CD4-positive, alpha-beta T cell (primary cell): ENCODE measurements at regions of chr20 and their contacts with region 1.

Region 1: DNA sequence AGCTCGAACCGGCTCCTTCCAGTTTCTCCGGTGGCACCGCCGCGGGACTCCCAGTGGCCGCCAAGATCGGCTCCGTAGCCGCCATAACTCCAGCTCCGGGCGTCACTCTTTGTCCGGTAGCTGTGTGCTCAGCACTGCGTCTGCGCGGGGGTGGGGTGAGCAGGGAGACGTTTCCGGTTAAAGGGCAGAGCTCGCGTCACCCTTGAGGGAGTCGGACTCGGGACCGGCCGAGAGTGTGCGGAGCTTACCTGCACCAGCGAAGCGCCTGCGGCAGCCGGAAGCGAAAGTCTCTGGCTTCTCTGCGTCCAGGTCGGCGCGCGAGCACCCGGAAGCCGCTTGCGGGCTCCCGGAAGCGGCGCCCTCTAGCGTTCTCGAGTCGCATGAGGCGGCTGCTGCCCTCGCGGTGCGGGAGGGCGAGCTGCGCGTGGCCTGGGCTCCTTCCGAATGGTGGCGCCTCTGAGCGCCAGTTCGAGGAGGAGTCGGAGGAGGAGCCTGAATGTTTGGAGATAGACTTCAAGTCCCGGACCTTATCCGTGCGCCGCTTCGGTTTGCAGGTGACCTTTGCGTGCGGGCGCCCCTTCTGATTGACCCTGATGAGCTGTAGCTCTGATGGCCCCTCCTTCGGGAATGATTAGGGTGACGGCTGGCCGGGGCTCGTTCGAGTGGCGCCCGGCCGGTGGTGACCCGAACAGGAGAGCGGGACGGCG is at the start of gene SCAND1:
- DNase-seq: peak; percentile 94 to 99 (median 96)
- ATAC-seq: peak; percentile 82
- H3K4me3 ChIP-seq: peak within 1 kb of the TSS; percentile 96
- H3K4me3 Mint-ChIP-seq: peak within 1 kb of the TSS; percentile 99
- H3K27ac ChIP-seq: peak within 1 kb of the TSS; percentile 99
- H3K27ac Mint-ChIP-seq: peak within 1 kb of the TSS; percentile 98
- H3K4me1 ChIP-seq: peaks cover 31% of the 10 kb centered on the region
- H3K4me1 Mint-ChIP-seq: peaks cover 30% of the 10 kb centered on the region
- H3K27me3 ChIP-seq: no peaks in the 10 kb centered on the region
- H3K27me3 Mint-ChIP-seq: no peaks in the 10 kb centered on the region
- CTCF ChIP-seq: peak; percentile 100
- total RNA-seq, gene SCAND1: 77.2 to 82.7 TPM

Region 2: GRCh38 chr20:34302723-34303528 is 1651.4 kb before region 1 on chr20 and contains the start of gene AHCY:
- CTCF ChIA-PET with region 1: no interaction called
- POLR2A ChIA-PET with region 1: interaction called, 6 read pairs
- intact Hi-C with region 1: loop called in 1 of 2 experiments (anchors 10 kb)
- DNase-seq: peak; percentile 78 to 96 (median 87)
- ATAC-seq: peak; percentile 94
- H3K4me3 ChIP-seq: peak within 1 kb of the TSS; percentile 82
- H3K4me3 Mint-ChIP-seq: peak within 1 kb of the TSS; percentile 98
- H3K27ac ChIP-seq: peak within 1 kb of the TSS; percentile 65 to 84
- H3K27ac Mint-ChIP-seq: peak within 1 kb of the TSS; percentile 91
- H3K4me1 ChIP-seq: peaks cover 17% of the 10 kb centered on the region
- H3K4me1 Mint-ChIP-seq: peaks cover 11% of the 10 kb centered on the region
- H3K27me3 ChIP-seq: no peaks in the 10 kb centered on the region
- H3K27me3 Mint-ChIP-seq: no peaks in the 10 kb centered on the region
- CTCF ChIP-seq: no peak
- total RNA-seq, gene AHCY: 16.7 to 16.9 TPM

Region 3: GRCh38 chr20:35410613-35411012 is 543.7 kb before region 1 on chr20:
- CTCF ChIA-PET with region 1: interaction called, 4 read pairs
- POLR2A ChIA-PET with region 1: interaction called, 7 read pairs
- intact Hi-C with region 1: loop called (anchors 1 to 5 kb)
- DNase-seq: no peak
- ATAC-seq: no peak
- H3K4me3 ChIP-seq: no peak overlapping the region
- H3K4me3 Mint-ChIP-seq: peak overlapping the region; percentile 96
- H3K27ac ChIP-seq: no peak overlapping the region
- H3K27ac Mint-ChIP-seq: peak overlapping the region; percentile 90
- H3K4me1 ChIP-seq: peaks cover 17% of the 10 kb centered on the region
- H3K4me1 Mint-ChIP-seq: peaks cover 23% of the 10 kb centered on the region
- H3K27me3 ChIP-seq: no peaks in the 10 kb centered on the region
- H3K27me3 Mint-ChIP-seq: no peaks in the 10 kb centered on the region
- CTCF ChIP-seq: no peak

Region 4: DNA sequence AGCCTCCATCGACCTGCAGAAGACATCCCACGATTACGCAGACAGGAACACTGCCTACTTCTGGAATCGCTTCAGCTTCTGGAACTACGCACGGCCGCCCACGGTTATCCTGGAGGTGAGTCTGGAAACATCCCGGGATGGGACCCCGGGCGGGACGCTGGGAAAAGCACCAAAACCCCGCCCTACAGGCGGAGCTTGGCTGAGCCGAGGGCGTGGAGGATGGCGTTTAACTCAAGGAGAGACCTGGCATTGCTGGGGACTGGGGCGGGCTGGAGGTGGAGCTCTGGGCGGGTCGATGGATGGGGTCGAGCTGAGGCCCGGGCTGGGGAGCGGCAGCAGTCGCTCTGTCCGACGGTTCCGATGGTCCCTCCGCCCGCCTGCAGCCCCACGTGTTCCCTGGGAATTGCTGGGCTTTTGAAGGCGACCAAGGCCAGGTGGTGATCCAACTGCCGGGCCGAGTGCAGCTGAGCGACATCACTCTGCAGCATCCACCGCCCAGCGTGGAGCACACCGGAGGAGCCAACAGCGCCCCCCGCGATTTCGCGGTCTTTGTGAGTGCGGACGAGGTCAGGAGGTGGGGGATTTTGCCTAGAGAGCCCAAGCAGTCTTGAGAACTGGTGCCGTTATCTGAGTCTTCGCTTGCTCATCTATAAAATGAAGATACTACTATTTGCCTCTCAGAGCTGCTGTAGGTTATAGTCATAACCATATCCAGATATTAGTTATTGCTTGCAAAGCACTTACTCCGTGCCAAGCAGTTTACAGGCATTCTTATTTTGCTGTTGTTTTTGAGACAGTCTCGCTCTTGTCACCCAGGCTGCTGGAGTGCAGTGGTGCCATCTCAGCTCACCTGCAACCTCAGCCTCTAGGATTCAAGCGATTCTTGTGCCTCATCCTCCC is 334.9 kb before region 1 on chr20:
- CTCF ChIA-PET with region 1: interaction called, 4 read pairs
- POLR2A ChIA-PET with region 1: interaction called, 23 read pairs
- intact Hi-C with region 1: loop called in 1 of 2 experiments (anchors 5 kb)
- DNase-seq: peak; percentile 50 to 91 (median 68)
- ATAC-seq: peak; percentile 9
- H3K4me3 ChIP-seq: peak overlapping the region; percentile 66
- H3K4me3 Mint-ChIP-seq: peak overlapping the region; percentile 91
- H3K27ac ChIP-seq: peak overlapping the region in 1 of 2 donors; percentile 15
- H3K27ac Mint-ChIP-seq: peak overlapping the region; percentile 94
- H3K4me1 ChIP-seq: peaks cover 45% of the 10 kb centered on the region
- H3K4me1 Mint-ChIP-seq: peaks cover 39% of the 10 kb centered on the region
- H3K27me3 ChIP-seq: no peaks in the 10 kb centered on the region
- H3K27me3 Mint-ChIP-seq: no peaks in the 10 kb centered on the region
- CTCF ChIP-seq: peak; percentile 59

Region 5: GRCh38 chr20:35771689-35772562 is 182.4 kb before region 1 on chr20 and contains the start of gene PHF20:
- CTCF ChIA-PET with region 1: interaction called, 4 read pairs
- POLR2A ChIA-PET with region 1: interaction called, 22 read pairs
- intact Hi-C with region 1: no loop called
- DNase-seq: peak; percentile 100
- ATAC-seq: peak; percentile 84
- H3K4me3 ChIP-seq: peak within 1 kb of the TSS; percentile 79
- H3K4me3 Mint-ChIP-seq: peak within 1 kb of the TSS; percentile 97
- H3K27ac ChIP-seq: peak within 1 kb of the TSS; percentile 86 to 96
- H3K27ac Mint-ChIP-seq: peak within 1 kb of the TSS; percentile 96
- H3K4me1 ChIP-seq: peaks cover 84% of the 10 kb centered on the region
- H3K4me1 Mint-ChIP-seq: peaks cover 75% of the 10 kb centered on the region
- H3K27me3 ChIP-seq: no peaks in the 10 kb centered on the region
- H3K27me3 Mint-ChIP-seq: no peaks in the 10 kb centered on the region
- CTCF ChIP-seq: no peak
- total RNA-seq, gene PHF20: 119 to 126 TPM

Region 6: GRCh38 chr20:36064658-36065426 is 110.5 kb after region 1 on chr20:
- CTCF ChIA-PET with region 1: interaction called, 4 read pairs
- POLR2A ChIA-PET with region 1: interaction called, 10 read pairs
- intact Hi-C with region 1: loop called in 1 of 2 experiments (anchors 2 kb)
- DNase-seq: peak; percentile 86 to 97 (median 94)
- ATAC-seq: peak; percentile 98
- H3K4me3 ChIP-seq: peak overlapping the region; percentile 78
- H3K4me3 Mint-ChIP-seq: peak overlapping the region; percentile 90
- H3K27ac ChIP-seq: peak overlapping the region in 1 of 2 donors; percentile 11
- H3K27ac Mint-ChIP-seq: no peak overlapping the region
- H3K4me1 ChIP-seq: peaks cover 19% of the 10 kb centered on the region
- H3K4me1 Mint-ChIP-seq: peaks cover 5% of the 10 kb centered on the region
- H3K27me3 ChIP-seq: no peaks in the 10 kb centered on the region
- H3K27me3 Mint-ChIP-seq: no peaks in the 10 kb centered on the region
- CTCF ChIP-seq: no peak